Gastrocnemius medialis (tissue), 4 donors: ENCODE measurements at regions of chr12 and their contacts with region 1.

Region 1: DNA sequence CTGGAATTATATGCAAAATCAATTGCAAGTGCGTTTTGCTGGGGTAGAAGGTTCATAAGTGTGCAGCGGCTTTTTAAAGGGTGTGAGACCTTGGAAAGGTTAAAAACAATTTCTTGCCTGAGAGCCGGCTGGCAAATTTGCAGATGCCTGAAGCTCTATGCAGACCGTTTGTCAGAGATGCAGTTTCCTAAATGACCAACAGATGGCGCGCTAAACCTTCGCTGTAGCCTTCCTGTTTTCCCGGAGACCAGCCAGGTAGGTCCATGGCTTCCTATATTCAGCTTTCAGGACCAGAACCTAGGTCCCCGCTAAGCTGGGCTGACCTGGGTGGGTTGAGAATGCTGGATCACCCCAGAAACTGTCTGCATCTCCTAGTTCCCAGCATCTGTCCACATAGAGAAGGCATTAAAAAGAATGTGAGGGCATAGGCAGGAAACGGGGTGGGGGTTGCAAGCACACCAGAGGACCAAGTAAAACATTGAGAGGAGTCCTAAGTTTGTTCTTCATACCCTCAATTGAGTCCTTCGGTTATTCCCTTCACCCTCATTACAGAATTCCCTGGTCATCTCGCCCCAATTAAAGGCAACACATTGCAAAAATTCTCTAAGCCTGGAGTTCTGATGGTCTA is 5.7 kb upstream of the NOS1 start:
- DNase-seq: peak; percentile 68 to 78
- ATAC-seq: peak; percentile 68 to 81
- H3K4me3 ChIP-seq: no peak overlapping the region
- H3K27ac ChIP-seq: peak overlapping the region in 3 of 4 donors; percentile 7 to 56 (median 10)
- H3K4me1 ChIP-seq: peaks cover 8 to 9% of the 10 kb centered on the region in 2 donors
- H3K27me3 ChIP-seq: no peaks in the 10 kb centered on the region
- CTCF ChIP-seq: peak; percentile 90 to 94 (median 91)
- POLR2A ChIP-seq: no peak

Region 2: GRCh38 chr12:117313926-117314325 is 53.2 kb before region 1 on chr12:
- in situ Hi-C with region 1: no loop called
- intact Hi-C with region 1: no loop called
- DNase-seq: no peak
- ATAC-seq: no peak
- H3K4me3 ChIP-seq: no peak overlapping the region
- H3K27ac ChIP-seq: no peak overlapping the region
- H3K4me1 ChIP-seq: no peaks in the 10 kb centered on the region
- H3K27me3 ChIP-seq: no peaks in the 10 kb centered on the region
- CTCF ChIP-seq: no peak
- POLR2A ChIP-seq: no peak

Region 3: DNA sequence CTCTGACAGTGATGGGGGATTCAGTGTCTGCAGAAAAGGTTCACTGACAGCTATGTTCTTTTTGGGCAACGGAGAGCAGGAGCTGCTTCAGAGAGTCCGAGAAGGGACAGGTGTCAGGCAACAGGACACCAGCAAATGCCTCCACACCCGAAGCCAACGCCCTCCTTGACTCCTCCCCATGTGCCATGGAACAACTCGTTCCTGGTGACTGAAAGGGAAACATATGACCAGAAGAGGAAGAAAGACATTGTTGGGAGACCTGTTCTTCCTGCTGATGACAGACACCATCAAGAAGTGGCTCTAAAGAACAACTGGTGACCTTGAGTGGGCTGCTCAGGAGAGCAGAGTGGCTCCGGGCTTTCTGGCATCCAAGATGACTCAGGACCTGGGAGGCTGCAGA is 166.6 kb after region 1 on chr12:
- in situ Hi-C with region 1: no loop called
- intact Hi-C with region 1: loop called (anchors 5 kb)
- DNase-seq: peak; percentile 94 to 97
- ATAC-seq: peak; percentile 92 to 96
- H3K4me3 ChIP-seq: no peak overlapping the region
- H3K27ac ChIP-seq: peak overlapping the region; percentile 89 to 93 (median 92)
- H3K4me1 ChIP-seq: peaks cover 22 to 26% of the 10 kb centered on the region in 2 donors
- H3K27me3 ChIP-seq: no peaks in the 10 kb centered on the region
- CTCF ChIP-seq: no peak
- POLR2A ChIP-seq: peak; percentile 32 to 42

Region 4: GRCh38 chr12:117587631-117588287 is 220.6 kb after region 1 on chr12:
- in situ Hi-C with region 1: loop called (anchors 5 to 10 kb)
- intact Hi-C with region 1: loop called (anchors 1 kb)
- DNase-seq: peak; percentile 27 to 65
- ATAC-seq: peak; percentile 83 to 91
- H3K4me3 ChIP-seq: peak overlapping the region in 3 of 4 donors; percentile 27 to 33 (median 30)
- H3K27ac ChIP-seq: no peak overlapping the region
- H3K4me1 ChIP-seq: no peaks in the 10 kb centered on the region
- H3K27me3 ChIP-seq: peaks cover 0 to 5% (median 0%) of the 10 kb centered on the region in 3 donors
- CTCF ChIP-seq: peak; percentile 87 to 92 (median 90)
- POLR2A ChIP-seq: no peak

Region 5: GRCh38 chr12:117671734-117672133 is 304.6 kb after region 1 on chr12:
- in situ Hi-C with region 1: no loop called
- intact Hi-C with region 1: loop called (anchors 10 kb)
- DNase-seq: peak in 1 of 2 donors; percentile 15
- ATAC-seq: peak in 1 of 2 donors; percentile 33
- H3K4me3 ChIP-seq: no peak overlapping the region
- H3K27ac ChIP-seq: no peak overlapping the region
- H3K4me1 ChIP-seq: no peaks in the 10 kb centered on the region
- H3K27me3 ChIP-seq: no peaks in the 10 kb centered on the region
- CTCF ChIP-seq: peak in 4 of 5 experiments; percentile 22 to 61 (median 44)
- POLR2A ChIP-seq: no peak

Region 6: GRCh38 chr12:117836999-117837736 is 470.0 kb after region 1 on chr12:
- in situ Hi-C with region 1: loop called (anchors 5 to 25 kb)
- intact Hi-C with region 1: loop called (anchors 1 kb)
- DNase-seq: peak; percentile 44 to 59
- ATAC-seq: peak; percentile 67 to 74
- H3K4me3 ChIP-seq: no peak overlapping the region
- H3K27ac ChIP-seq: no peak overlapping the region
- H3K4me1 ChIP-seq: no peaks in the 10 kb centered on the region
- H3K27me3 ChIP-seq: peaks cover 0 to 3% (median 0%) of the 10 kb centered on the region in 3 donors
- CTCF ChIP-seq: peak; percentile 85 to 92 (median 90)
- POLR2A ChIP-seq: no peak

Region 7: GRCh38 chr12:119096416-119097202 is 1729.5 kb after region 1 on chr12:
- in situ Hi-C with region 1: no loop called
- intact Hi-C with region 1: no loop called
- DNase-seq: no peak
- ATAC-seq: no peak
- H3K4me3 ChIP-seq: no peak overlapping the region
- H3K27ac ChIP-seq: no peak overlapping the region
- H3K4me1 ChIP-seq: no peaks in the 10 kb centered on the region
- H3K27me3 ChIP-seq: peaks cover 5 to 8% (median 5%) of the 10 kb centered on the region in 3 donors
- CTCF ChIP-seq: no peak
- POLR2A ChIP-seq: no peak